Heart right ventricle (tissue), 16 donors: ENCODE measurements at regions of chr6 and their contacts with region 1.

Region 1: GRCh38 chr6:19024737-19025136 is 637.6 kb downstream of the RNF144B start:
- DNase-seq: peak in 1 of 2 donors; percentile 25
- ATAC-seq: peak in 5 of 8 donors; percentile 49 to 69 (median 58)
- H3K4me3 ChIP-seq: no peak overlapping the region
- H3K27ac ChIP-seq: no peak overlapping the region
- H3K4me1 ChIP-seq: peaks cover 0 to 4% (median 0%) of the 10 kb centered on the region in 9 donors
- H3K27me3 ChIP-seq: no peaks in the 10 kb centered on the region
- CTCF ChIP-seq: peak; percentile 9 to 70 (median 56)

Region 2: GRCh38 chr6:17831135-17831534 is 1193.6 kb before region 1 on chr6:
- intact Hi-C with region 1: no loop called
- DNase-seq: peak in 1 of 2 donors; percentile 54
- ATAC-seq: peak; percentile 67 to 92 (median 88)
- H3K4me3 ChIP-seq: no peak overlapping the region
- H3K27ac ChIP-seq: peak overlapping the region in 5 of 10 donors; percentile 20 to 66 (median 41)
- H3K4me1 ChIP-seq: peaks cover 0 to 17% (median 11%) of the 10 kb centered on the region in 9 donors
- H3K27me3 ChIP-seq: no peaks in the 10 kb centered on the region
- CTCF ChIP-seq: peak in 1 of 9 donors; percentile 10

Region 3: DNA sequence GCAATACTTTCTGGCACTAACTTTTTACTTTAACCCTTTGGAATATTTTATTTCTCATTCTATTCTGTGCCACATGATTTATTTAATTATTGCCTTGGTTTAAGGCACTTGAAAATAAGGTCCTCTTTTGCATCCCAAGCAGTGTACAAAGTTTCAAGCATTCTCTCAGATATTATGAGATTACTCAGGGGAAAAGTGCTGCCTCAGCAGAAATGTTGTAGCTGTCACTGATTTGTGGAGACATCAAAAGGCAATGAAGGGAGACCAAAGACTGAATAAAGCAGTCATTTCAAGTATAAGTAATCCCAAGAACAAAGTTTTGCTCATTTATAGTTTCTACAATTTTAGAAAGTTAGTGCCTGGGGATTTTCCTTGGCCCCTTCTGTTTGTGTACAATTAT is 384.6 kb before region 1 on chr6:
- intact Hi-C with region 1: no loop called
- DNase-seq: no peak
- ATAC-seq: no peak
- H3K4me3 ChIP-seq: no peak overlapping the region
- H3K27ac ChIP-seq: no peak overlapping the region
- H3K4me1 ChIP-seq: no peaks in the 10 kb centered on the region
- H3K27me3 ChIP-seq: no peaks in the 10 kb centered on the region
- CTCF ChIP-seq: no peak

Region 4: GRCh38 chr6:19070520-19070919 is 45.8 kb after region 1 on chr6:
- intact Hi-C with region 1: no loop called
- DNase-seq: peak in 1 of 2 donors; percentile 29
- ATAC-seq: peak in 5 of 8 donors; percentile 25 to 61 (median 46)
- H3K4me3 ChIP-seq: no peak overlapping the region
- H3K27ac ChIP-seq: no peak overlapping the region
- H3K4me1 ChIP-seq: no peaks in the 10 kb centered on the region
- H3K27me3 ChIP-seq: no peaks in the 10 kb centered on the region
- CTCF ChIP-seq: no peak

Region 5: GRCh38 chr6:19180344-19181072 is 155.8 kb after region 1 on chr6:
- intact Hi-C with region 1: no loop called
- DNase-seq: peak; percentile 37 to 84
- ATAC-seq: peak; percentile 95 to 99 (median 96)
- H3K4me3 ChIP-seq: no peak overlapping the region
- H3K27ac ChIP-seq: peak overlapping the region in 7 of 10 donors; percentile 9 to 72 (median 58)
- H3K4me1 ChIP-seq: peaks cover 0 to 17% (median 7%) of the 10 kb centered on the region in 9 donors
- H3K27me3 ChIP-seq: no peaks in the 10 kb centered on the region
- CTCF ChIP-seq: no peak

Region 6: GRCh38 chr6:19210849-19211590 is 186.3 kb after region 1 on chr6:
- intact Hi-C with region 1: loop called in 6 of 10 experiments (anchors 1 to 10 kb)
- DNase-seq: peak; percentile 13 to 22
- ATAC-seq: peak in 1 of 8 donors; percentile 33
- H3K4me3 ChIP-seq: no peak overlapping the region
- H3K27ac ChIP-seq: no peak overlapping the region
- H3K4me1 ChIP-seq: no peaks in the 10 kb centered on the region
- H3K27me3 ChIP-seq: no peaks in the 10 kb centered on the region
- CTCF ChIP-seq: peak; percentile 14 to 53 (median 46)

Region 7: GRCh38 chr6:19845266-19846041 is 820.7 kb after region 1 on chr6:
- intact Hi-C with region 1: loop called in 6 of 10 experiments (anchors 5 to 10 kb)
- DNase-seq: no peak
- ATAC-seq: no peak
- H3K4me3 ChIP-seq: no peak overlapping the region
- H3K27ac ChIP-seq: peak overlapping the region in 1 of 10 donors; percentile 19
- H3K4me1 ChIP-seq: no peaks in the 10 kb centered on the region
- H3K27me3 ChIP-seq: peaks cover 0 to 41% (median 19%) of the 10 kb centered on the region in 7 donors
- CTCF ChIP-seq: no peak